ENCODE measurements at regions of chr13 and their contacts with region 1.

Region 1: DNA sequence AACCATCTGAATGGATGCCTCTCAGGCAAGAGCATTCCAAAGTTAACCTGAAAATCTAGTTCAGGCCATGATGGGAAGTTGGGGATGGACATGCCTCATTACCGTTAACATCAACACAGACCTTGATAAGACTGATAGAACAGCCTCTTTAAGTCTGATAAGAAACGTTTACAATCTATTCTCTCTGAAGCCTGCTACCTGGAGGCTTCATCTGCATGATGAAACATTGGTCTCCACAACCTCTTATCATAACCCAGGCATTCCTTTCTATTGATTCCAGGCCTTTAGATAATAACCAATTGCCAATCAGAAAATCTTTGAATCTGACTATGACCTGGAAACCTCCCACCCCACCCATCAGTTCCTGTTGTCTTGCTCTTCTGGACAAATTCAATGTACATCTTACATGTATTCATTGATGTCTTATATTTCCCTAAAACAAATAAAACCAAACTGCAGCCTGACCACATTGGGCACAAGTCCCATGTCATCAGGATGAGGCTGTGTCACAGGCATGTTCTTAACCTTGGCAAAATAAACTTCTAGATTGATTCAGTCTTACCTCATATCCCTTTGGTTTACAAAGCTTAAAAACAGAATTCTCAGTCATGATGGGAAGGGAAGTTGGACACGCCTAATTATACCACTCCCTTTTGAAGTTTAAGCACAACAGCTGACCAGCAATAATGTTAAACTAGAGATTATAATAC is 843.8 kb upstream of the SPRY2 start:
- DNase-seq: no peak
- CTCF ChIP-seq: no peak

Region 2: GRCh38 chr13:81142299-81143001 is 42.3 kb before region 1 on chr13:
- CTCF ChIA-PET with region 1: no interaction called
- POLR2A ChIA-PET with region 1: no interaction called
- DNase-seq: no peak
- CTCF ChIP-seq: no peak

Region 3: GRCh38 chr13:81171065-81171647 is 13.6 kb before region 1 on chr13:
- CTCF ChIA-PET with region 1: interaction called, 10 read pairs
- POLR2A ChIA-PET with region 1: no interaction called
- DNase-seq: no peak
- CTCF ChIP-seq: peak; percentile 46